Naive thymus-derived CD4-positive, alpha-beta T cell (primary cell): ENCODE measurements at regions of chr18 and their contacts with region 1.

Region 1: DNA sequence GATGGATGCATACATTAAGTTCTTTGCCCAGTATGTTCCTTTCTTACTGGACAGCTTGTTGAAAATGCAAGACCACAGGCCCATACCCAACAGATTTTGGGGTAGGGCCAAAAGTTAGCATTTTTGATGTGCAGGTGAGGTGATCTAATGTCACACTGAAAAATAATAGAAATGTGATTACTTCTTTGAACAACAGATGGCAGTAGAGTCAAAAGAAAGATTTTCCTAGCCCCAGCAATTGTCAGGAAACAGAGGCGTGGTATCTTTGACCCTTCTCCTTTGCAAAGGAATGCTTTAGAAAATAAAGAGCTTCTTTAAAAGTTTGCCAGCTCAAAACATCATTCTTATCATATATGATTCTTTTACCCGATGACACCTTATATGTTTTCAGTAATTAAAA is 343.6 kb upstream of the SYT4 start:
- DNase-seq: peak in 1 of 9 donors; percentile 3
- ATAC-seq: no peak
- H3K4me3 ChIP-seq: no peak overlapping the region
- H3K4me3 Mint-ChIP-seq: no peak overlapping the region
- H3K27ac ChIP-seq: no peak overlapping the region
- H3K27ac Mint-ChIP-seq: no peak overlapping the region
- H3K4me1 ChIP-seq: no peaks in the 10 kb centered on the region
- H3K4me1 Mint-ChIP-seq: no peaks in the 10 kb centered on the region
- H3K27me3 ChIP-seq: no peaks in the 10 kb centered on the region
- H3K27me3 Mint-ChIP-seq: no peaks in the 10 kb centered on the region

Region 2: DNA sequence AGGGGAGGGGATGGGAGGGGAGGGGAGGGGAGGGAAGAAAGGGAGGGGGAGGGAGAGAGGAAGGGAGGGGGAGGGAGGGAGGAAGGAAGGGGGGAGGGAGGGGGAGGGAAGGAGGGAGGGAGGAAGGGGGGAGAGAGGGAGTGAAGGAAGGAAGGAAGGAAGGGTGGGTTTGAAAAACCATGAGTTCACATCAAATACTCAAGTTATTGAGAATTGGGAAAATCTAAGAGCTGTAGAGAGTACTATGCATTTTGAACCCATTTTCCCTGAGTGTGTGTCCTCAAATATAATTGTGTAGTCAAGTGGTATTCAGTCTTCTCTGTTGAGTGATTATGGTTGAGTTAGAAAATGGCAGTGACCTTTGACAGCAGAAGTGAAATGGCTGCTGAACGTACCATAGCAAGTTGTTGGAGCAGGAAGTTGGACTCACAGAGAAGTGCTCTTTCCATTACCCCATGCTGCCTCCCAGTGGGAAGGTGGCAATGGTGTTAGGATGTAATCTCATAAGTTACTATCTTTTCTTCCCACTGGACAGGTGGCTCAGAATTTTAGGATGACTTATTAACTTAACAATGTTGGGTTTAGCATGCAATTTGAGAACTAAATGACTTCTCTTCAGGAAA is 1274.4 kb after region 1 on chr18:
- CTCF ChIA-PET with region 1: no interaction called
- POLR2A ChIA-PET with region 1: no interaction called
- intact Hi-C with region 1: loop called in 1 of 2 experiments (anchors 5 kb)
- DNase-seq: no peak
- ATAC-seq: no peak
- H3K4me3 ChIP-seq: no peak overlapping the region
- H3K4me3 Mint-ChIP-seq: no peak overlapping the region
- H3K27ac ChIP-seq: no peak overlapping the region
- H3K27ac Mint-ChIP-seq: no peak overlapping the region
- H3K4me1 ChIP-seq: no peaks in the 10 kb centered on the region
- H3K4me1 Mint-ChIP-seq: peaks cover 0 to 24% (median 6%) of the 10 kb centered on the region in 7 donors
- H3K27me3 ChIP-seq: no peaks in the 10 kb centered on the region
- H3K27me3 Mint-ChIP-seq: peaks cover 0 to 18% (median 0%) of the 10 kb centered on the region in 5 donors

Region 3: DNA sequence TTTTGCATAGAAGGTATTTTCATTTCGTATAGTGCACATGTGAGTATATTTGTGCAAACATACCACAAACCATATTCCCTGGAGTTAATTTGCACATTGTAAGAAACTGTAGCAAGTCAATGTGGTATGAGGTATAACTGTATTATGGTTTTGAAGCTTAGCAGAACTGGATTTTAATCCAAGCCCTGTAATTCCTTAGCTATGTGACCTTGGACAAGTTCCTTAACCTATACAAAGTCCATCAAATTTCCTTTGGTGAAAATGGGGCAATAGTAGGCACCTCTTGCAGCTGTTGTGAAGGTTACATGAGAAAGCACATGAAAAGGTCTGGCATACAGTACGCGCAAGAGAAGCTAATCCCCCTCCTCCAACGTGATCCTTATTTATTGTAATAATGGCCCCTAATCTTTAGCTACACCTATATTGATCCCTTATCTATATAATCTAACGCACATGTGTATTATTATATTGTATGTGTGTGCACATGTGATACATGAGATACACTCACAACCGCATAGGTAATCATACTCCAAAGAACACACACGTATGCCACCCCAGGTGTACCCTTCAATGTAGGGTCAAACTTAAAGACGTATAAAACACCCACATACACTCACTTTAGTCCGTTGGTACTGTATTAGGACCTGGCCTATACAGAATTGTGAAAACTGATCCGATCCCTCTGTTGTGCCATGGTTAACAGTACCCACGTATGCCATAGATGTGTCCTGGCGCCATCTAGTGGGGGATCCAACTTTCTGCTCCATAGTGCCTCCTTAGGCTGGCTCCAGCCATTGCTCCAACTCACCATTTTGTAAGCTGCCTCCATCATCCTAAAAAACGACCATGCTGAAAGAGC is 1591.5 kb after region 1 on chr18:
- CTCF ChIA-PET with region 1: no interaction called
- POLR2A ChIA-PET with region 1: no interaction called
- intact Hi-C with region 1: loop called in 1 of 2 experiments (anchors 1 kb)
- DNase-seq: peak in 6 of 9 donors; percentile 3 to 69 (median 26)
- ATAC-seq: peak; percentile 98
- H3K4me3 ChIP-seq: no peak overlapping the region
- H3K4me3 Mint-ChIP-seq: no peak overlapping the region
- H3K27ac ChIP-seq: no peak overlapping the region
- H3K27ac Mint-ChIP-seq: no peak overlapping the region
- H3K4me1 ChIP-seq: no peaks in the 10 kb centered on the region
- H3K4me1 Mint-ChIP-seq: peaks cover 0 to 3% (median 0%) of the 10 kb centered on the region in 7 donors
- H3K27me3 ChIP-seq: no peaks in the 10 kb centered on the region
- H3K27me3 Mint-ChIP-seq: peaks cover 0 to 6% (median 5%) of the 10 kb centered on the region in 5 donors